ENCODE measurements at regions of chr19 and their contacts with region 1.

Region 1: GRCh38 chr19:46355234-46356148 is 8.6 kb downstream of the PPP5C start:
- DNase-seq: peak; percentile 75

Region 2: DNA sequence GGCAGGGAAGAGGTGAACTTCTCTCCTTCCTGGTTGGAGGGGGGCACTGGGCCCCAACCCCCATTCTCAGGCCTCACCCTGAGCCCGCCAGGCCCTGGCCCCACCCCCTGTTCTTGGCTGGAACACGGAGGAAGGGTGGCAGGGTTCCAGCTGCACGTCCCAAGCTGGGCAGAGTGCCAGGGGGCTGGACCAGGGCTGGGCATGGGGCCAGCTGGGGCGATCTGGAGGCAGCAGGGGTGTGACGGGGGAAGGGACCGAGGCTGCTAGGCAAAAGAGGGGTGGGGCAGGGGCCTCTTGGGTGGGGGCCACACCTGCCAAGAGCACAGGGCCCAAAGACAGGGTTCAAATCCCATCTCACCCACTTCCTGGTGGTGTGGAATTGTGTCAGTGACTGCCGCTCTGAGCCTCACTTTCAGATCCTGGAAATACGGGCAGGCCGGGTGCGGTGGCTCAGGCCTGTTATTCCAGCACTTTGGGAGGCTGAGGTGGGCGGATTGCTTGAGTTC is 56.4 kb before region 1 on chr19:
- intact Hi-C with region 1: no loop called
- DNase-seq: peak; percentile 96

Region 3: DNA sequence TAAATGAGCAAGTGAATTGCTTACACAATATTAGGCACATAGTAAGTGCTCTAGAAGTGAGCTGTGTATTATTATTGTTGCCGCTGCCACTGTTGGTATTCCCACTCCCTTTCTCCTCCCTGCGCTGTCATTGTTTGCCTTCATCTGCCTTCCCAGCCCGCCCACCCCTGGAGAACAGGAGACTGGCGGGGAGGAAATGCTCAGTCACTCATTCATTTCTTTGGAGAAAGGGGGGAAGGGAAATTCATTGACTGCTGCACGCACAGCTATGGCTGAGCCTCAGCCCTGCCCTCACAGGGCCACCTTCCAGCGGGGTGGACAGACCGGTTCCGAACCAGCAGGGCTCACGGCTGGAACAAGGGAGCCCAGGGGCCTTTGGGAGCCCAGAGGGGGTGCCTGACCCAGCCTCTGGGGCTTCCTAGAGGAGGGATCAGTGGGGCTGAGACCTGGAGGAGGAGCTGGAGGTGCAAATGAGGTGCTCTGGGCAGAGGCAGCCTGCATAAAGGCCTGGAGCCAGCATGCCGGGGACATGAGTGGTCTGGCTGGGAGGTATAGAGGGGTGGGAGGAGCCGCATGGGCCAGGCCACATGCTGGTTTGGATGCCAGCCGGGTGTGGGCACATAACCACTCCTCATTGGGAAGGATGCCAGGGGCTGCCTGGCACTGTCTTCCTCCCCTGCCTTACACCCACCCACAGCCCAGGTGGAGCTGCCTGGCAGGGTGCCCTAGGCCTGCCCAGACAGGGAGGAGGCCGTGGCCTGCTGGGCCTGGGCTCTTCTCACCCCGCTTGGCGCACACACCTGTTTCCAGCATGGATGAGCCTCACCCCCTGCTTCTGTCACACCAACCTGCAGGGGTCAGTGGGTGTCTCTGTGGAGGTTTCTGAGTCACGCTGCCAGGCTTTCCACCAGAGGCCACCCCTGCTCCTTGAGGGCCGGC is 18.2 kb after region 1 on chr19:
- intact Hi-C with region 1: loop called (anchors 2 kb)
- DNase-seq: peak; percentile 91

Measured in cardiac septum (tissue), 1 donor.